ENCODE measurements at regions of chr10 and their contacts with region 1.

Region 1: DNA sequence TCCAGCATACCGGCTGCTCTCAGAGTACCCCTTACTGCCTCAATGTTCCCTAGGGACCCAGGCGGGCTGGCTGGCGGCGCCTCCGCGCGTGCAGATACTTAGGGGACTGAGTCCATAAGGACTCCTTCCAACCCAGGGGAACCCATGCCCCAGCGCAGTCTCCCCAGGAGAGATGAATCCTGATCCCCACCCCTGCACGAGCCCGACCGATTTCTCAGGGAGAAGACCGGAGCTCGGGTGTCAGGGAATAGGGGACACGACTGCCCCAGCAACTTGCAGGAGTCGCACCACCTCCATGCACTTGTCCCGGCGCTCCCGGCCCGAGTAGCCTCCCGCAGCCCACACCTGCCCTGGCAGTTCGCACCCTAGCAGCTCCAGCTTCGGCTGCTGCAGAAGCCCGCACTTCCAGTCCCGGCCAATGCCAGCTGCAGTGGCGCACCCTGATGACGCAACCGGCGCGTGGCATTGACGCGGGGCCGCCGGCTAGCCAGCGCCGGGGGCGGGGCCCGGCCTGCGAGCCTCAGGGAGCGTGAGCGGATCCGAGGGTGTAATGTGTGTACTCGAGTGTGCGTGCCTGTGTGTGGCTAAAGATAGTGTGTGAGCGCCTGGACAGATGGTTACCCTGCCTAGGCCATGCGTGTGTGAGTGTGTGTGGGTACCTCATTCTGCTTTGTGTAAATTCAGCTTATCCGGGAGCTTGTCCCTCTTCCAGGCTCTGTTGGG is at the start of gene GPAM:
- DNase-seq: peak; percentile 59 to 88
- H3K4me3 ChIP-seq: peak within 1 kb of the TSS; percentile 78
- H3K27ac ChIP-seq: peak within 1 kb of the TSS; percentile 52
- H3K4me1 ChIP-seq: 0 out of 2 replicates have a peak, but pooled peaks cover 4% of the 10 kb centered on the region
- H3K27me3 ChIP-seq: no peaks in the 10 kb centered on the region
- CTCF ChIP-seq: no peak
- total RNA-seq, gene GPAM: 2.1 and 4.2 TPM in 2 replicates

Region 2: DNA sequence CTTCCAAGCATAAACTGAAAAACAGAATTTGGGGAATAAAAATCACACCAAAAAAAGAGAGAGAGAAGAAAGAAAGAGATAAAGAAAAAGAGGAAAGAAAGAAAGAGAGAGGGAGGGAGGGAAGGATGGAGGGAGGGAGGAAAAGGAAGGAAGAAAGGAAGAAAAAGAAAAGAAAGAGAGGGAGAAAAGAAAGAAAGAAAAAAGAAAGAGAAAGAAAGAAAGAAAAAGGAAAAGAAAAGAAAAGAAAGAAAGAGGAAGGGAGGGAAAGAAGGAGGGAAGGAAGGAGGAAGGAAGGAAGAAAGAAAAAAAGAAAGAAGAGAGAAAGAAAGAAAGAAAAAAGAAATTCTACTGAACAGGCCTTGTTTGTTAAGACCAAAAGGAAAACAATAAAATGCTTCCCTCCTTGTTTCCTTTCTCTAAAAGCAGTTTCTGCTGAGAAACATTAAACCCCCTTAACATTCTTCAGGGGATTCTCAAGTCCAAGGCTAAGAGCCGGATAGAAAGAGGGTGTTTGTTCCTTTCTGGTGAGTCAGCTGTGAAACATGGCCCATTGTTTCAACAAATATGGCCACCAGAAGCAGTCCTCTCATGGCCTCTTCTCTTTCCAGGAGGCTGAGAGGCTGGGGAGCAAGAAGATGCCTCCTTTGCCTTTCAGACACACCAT is 47.0 kb after region 1 on chr10:
- CTCF ChIA-PET with region 1: no interaction called
- POLR2A ChIA-PET with region 1: no interaction called
- intact Hi-C with region 1: no loop called
- DNase-seq: no peak
- H3K4me3 ChIP-seq: no peak overlapping the region
- H3K27ac ChIP-seq: no peak overlapping the region
- H3K4me1 ChIP-seq: no peaks in the 10 kb centered on the region
- H3K27me3 ChIP-seq: no peaks in the 10 kb centered on the region
- CTCF ChIP-seq: no peak

Region 3: DNA sequence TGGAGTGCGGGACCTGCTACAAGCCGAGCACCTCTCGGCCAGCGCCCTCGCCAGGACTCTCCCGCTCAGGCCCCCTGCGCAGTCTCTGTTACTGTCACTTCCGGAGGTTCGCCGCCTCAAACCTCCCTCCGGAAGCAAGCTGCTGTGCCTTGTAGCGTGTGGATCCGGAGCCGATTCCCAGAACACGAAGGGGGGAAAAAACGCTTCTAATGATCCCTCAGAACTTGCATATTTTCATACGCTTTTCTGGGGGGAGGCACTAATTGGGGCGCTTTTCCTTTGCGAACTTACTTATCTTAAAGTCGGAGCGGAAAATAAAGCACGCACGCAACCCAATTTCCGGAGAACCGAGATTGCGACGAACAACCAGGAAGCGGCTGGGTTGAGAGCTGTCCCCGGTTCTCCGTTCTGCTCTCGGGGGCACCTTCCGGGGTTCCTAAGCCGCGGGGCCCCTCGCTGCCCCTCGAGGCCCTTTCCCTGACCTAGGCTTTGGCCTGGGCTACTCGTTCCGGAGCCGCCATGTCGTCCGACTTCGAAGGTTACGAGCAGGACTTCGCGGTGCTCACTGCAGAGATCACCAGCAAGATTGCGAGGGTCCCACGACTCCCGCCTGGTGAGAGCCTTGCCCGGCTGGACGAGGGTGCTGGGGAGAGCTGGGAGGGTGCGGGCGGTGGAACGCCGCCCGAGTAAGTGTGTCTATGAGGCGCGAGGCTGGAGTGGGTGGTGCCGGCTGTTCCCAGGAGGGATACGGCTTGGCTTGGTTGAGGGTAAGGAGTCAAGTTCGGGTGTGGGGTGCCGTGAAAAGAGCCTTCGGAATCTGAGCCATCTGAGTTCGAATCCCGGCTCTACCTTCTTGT is 263.6 kb after region 1 on chr10 and contains the starts of genes VTI1A and ZDHHC6:
- CTCF ChIA-PET with region 1: no interaction called
- POLR2A ChIA-PET with region 1: no interaction called
- intact Hi-C with region 1: loop called (anchors 2 kb)
- DNase-seq: peak; percentile 63 to 65
- H3K4me3 ChIP-seq: peak within 1 kb of the TSS; percentile 97
- H3K27ac ChIP-seq: peak within 1 kb of the TSS; percentile 81
- H3K4me1 ChIP-seq: peaks cover 7% of the 10 kb centered on the region
- H3K27me3 ChIP-seq: no peaks in the 10 kb centered on the region
- CTCF ChIP-seq: no peak
- total RNA-seq, gene VTI1A: 18.1 and 18.3 TPM in 2 replicates
- total RNA-seq, gene ZDHHC6: 14.0 and 24.2 TPM in 2 replicates